ENCODE measurements at regions of chr3 and their contacts with region 1.

Region 1: GRCh38 chr3:48222616-48223513 is at the start of gene CAMP:
- DNase-seq: no peak
- H3K4me3 ChIP-seq: no peak within 1 kb of the TSS
- CTCF ChIP-seq: no peak

Region 2: DNA sequence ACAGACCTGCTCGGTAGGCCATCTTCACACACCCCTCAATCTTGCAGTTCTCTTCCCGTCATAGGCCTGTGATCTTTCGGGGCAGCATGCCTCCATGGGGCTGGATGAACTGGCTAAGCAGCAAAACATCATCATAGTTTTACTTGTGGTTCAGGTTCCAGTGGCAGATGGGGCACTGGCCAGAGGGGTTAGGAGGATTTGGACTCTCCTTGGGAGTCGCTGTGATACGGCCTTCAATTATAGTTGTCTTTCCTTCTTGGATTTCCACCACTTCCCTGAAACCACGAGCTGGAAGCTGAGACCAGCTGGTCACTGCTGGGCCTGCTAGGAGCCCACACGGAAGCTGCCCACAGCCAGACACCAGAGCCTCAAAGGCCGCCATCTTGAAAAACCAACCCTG is 33.7 kb after region 1 on chr3:
- in situ Hi-C with region 1: loop called (anchors 5 kb)
- DNase-seq: no peak
- H3K4me3 ChIP-seq: no peak overlapping the region
- CTCF ChIP-seq: no peak